Activated CD4-positive, alpha-beta memory T cell treated with anti-CD3 and anti-CD28 coated beads for 36 hours (primary cell): ENCODE measurements at regions of chr10 and their contacts with region 1.

Region 1: GRCh38 chr10:90862908-90863514 is 5.2 kb upstream of the HTR7 start:
- DNase-seq: no peak
- H3K4me3 Mint-ChIP-seq: no peak overlapping the region
- H3K27ac Mint-ChIP-seq: no peak overlapping the region
- H3K4me1 Mint-ChIP-seq: peaks cover 10% of the 10 kb centered on the region
- H3K27me3 Mint-ChIP-seq: peaks cover 33% of the 10 kb centered on the region

Region 2: GRCh38 chr10:90751107-90751997 is 111.7 kb before region 1 on chr10:
- CTCF ChIA-PET with region 1: interaction called, 12 read pairs
- POLR2A ChIA-PET with region 1: no interaction called
- intact Hi-C with region 1: loop called (anchors 1 kb)
- DNase-seq: peak; percentile 58
- H3K4me3 Mint-ChIP-seq: no peak overlapping the region
- H3K27ac Mint-ChIP-seq: no peak overlapping the region
- H3K4me1 Mint-ChIP-seq: no peaks in the 10 kb centered on the region
- H3K27me3 Mint-ChIP-seq: peaks cover 33% of the 10 kb centered on the region

Region 3: GRCh38 chr10:90775351-90776028 is 87.5 kb before region 1 on chr10:
- CTCF ChIA-PET with region 1: no interaction called
- POLR2A ChIA-PET with region 1: no interaction called
- intact Hi-C with region 1: no loop called
- DNase-seq: no peak
- H3K4me3 Mint-ChIP-seq: no peak overlapping the region
- H3K27ac Mint-ChIP-seq: no peak overlapping the region
- H3K4me1 Mint-ChIP-seq: no peaks in the 10 kb centered on the region
- H3K27me3 Mint-ChIP-seq: peaks cover 2% of the 10 kb centered on the region

Region 4: GRCh38 chr10:90787393-90788198 is 75.4 kb before region 1 on chr10:
- CTCF ChIA-PET with region 1: interaction called, 17 read pairs
- POLR2A ChIA-PET with region 1: no interaction called
- intact Hi-C with region 1: no loop called
- DNase-seq: peak; percentile 29
- H3K4me3 Mint-ChIP-seq: no peak overlapping the region
- H3K27ac Mint-ChIP-seq: no peak overlapping the region
- H3K4me1 Mint-ChIP-seq: no peaks in the 10 kb centered on the region
- H3K27me3 Mint-ChIP-seq: peaks cover 9% of the 10 kb centered on the region

Region 5: GRCh38 chr10:90817128-90817889 is 45.7 kb before region 1 on chr10:
- CTCF ChIA-PET with region 1: no interaction called
- POLR2A ChIA-PET with region 1: no interaction called
- intact Hi-C with region 1: no loop called
- DNase-seq: no peak
- H3K4me3 Mint-ChIP-seq: no peak overlapping the region
- H3K27ac Mint-ChIP-seq: no peak overlapping the region
- H3K4me1 Mint-ChIP-seq: no peaks in the 10 kb centered on the region
- H3K27me3 Mint-ChIP-seq: peaks cover 6% of the 10 kb centered on the region

Region 6: GRCh38 chr10:90834326-90834725 is 28.7 kb before region 1 on chr10:
- CTCF ChIA-PET with region 1: no interaction called
- POLR2A ChIA-PET with region 1: no interaction called
- intact Hi-C with region 1: no loop called
- DNase-seq: no peak
- H3K4me3 Mint-ChIP-seq: no peak overlapping the region
- H3K27ac Mint-ChIP-seq: no peak overlapping the region
- H3K4me1 Mint-ChIP-seq: no peaks in the 10 kb centered on the region
- H3K27me3 Mint-ChIP-seq: peaks cover 2% of the 10 kb centered on the region